ENCODE measurements at regions of chr9 and their contacts with region 1.

Region 1: DNA sequence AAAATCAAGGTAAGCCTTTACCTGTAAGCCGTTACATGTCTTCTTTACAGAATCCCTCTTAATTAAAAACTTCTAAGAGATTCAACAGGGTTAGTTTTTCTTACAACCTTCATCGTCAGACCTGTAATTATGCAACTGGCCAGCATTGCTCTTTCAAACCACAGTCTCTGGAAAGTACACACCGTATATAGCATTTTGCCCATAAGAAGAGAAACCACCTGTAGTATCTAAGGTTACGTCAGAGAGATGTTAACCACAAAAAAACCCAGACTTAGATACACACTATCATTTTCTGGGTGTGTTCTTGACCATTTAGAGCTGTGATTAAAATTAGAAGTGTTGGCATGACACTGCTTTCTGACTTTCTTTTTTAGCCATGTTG is 140.0 kb downstream of the MUSK start:
- DNase-seq: no peak
- H3K4me3 ChIP-seq: no peak overlapping the region
- H3K27me3 ChIP-seq: no peaks in the 10 kb centered on the region
- CTCF ChIP-seq: no peak

Region 2: DNA sequence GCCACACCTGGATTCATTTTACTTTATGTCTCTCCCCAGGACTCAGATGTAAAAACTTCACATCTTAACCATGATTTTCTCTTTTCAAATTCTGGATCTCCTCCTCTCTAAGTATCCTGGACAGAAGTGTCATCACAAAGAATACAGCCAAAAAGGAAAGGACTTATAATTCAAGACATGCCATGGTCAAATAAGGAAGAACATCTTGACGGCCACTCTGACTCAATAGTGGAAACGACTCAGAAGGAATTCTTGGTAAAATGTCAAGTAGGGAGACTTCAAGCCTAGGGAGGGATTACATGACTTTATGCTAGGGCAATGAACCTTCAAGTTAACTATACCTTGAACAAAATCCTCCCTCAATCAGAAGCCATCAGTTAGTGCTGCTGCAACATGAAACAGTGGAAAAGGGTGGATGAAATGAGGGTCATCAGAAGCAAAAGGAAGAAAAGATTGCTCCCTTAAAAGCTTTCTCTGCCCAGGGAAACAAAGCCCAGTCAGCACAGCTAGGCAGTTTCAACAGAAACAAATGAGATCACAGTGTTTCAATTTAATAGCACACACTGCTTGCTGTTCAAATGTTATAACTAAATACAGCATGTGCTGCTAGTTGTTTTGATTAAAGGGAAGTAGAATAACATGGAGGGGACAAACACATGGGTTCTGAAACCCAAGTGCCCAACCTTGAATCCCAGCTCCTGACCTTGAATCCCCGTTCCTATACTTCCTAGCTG is 128.3 kb after region 1 on chr9:
- CTCF ChIA-PET with region 1: no interaction called
- POLR2A ChIA-PET with region 1: no interaction called
- DNase-seq: peak; percentile 76
- H3K4me3 ChIP-seq: no peak overlapping the region
- H3K27me3 ChIP-seq: no peaks in the 10 kb centered on the region
- CTCF ChIP-seq: no peak

Region 3: DNA sequence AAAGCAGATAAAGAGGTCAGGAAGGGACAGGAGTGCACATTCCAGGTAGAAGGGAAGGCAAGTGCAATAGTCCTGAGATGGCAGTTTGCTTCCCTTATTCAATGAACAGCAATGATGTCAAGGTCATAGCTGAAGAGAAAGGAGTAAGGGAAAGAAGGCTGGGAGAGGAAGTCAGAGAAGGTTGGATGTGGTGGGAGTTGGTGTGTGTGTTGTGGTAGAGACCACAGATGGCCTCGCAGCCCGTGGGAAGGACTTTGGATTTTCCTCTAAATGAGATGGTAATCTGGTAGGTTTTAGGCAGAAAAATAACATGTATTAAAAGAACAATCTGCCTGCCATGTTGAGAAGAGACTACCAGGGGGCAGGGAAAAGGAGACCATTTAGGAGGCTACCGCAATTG is 254.7 kb after region 1 on chr9:
- CTCF ChIA-PET with region 1: no interaction called
- POLR2A ChIA-PET with region 1: interaction called, 22 read pairs
- DNase-seq: no peak
- H3K4me3 ChIP-seq: no peak overlapping the region
- H3K27me3 ChIP-seq: no peaks in the 10 kb centered on the region
- CTCF ChIP-seq: no peak

Region 4: DNA sequence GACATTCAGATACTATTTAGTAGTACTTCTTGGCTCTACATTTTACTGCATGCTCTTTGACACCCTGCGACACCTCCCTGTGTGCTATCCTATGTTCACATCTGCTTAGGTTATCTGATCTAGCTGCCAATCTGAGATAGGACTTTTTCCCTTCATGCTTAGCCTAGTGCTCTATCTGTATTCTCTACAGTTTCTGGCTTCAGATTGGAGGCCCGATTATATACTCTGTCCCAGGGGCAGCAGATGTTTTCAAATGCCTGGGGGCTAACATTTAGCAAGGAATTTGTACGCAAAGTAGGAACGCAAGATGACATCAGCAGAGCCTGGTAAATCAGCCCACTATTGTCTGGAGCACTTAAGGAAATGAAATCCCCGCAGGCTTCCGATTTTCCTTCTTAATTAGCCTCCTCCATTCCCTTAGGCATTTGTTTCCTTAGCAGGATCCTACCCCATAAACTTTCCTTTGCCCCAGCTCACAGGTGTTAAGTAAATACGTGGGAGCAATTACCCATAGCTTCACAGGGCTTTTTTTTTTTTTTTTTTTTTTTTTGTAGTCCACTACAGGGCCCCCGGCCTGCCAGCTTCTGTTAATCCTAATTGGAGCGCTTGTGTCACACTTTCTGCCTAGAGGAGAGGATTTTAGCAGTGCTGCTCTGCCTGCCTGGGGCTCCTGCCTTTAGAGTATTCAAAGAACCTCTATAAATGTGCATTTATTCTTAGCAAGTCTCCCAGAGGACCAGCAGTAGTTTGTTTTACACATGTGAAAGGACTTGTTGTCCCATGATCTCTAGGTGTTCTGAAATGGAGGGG is 290.8 kb after region 1 on chr9:
- CTCF ChIA-PET with region 1: no interaction called
- POLR2A ChIA-PET with region 1: no interaction called
- DNase-seq: peak; percentile 41
- H3K4me3 ChIP-seq: no peak overlapping the region
- H3K27me3 ChIP-seq: no peaks in the 10 kb centered on the region
- CTCF ChIP-seq: no peak

Measured in BJ (cell line).